ENCODE measurements at regions of chr11 and their contacts with region 1.

Region 1: DNA sequence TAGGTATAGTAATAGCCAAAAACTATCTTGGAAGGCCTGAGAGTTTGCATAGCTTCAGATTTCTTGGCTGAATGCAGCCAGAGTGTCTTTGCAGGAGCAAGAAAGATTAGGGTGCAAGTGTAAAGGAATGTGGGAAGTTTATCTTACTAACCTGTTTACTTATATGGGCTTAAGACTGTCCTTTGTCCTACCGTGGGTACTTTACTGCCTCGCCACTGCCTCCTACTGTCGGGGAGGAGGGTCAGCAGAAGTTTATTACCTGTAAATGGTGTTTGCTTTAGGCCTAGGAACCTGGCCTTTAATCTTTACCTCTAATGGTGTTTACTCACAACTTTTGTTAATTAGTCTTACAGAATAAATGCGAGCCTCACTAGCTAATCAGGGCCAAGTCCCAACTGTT is 633.8 kb downstream of the DLG2 start:
- DNase-seq: no peak
- H3K4me3 Mint-ChIP-seq: no peak overlapping the region
- H3K27ac Mint-ChIP-seq: no peak overlapping the region
- H3K4me1 Mint-ChIP-seq: no peaks in the 10 kb centered on the region
- H3K27me3 Mint-ChIP-seq: peaks cover 24% of the 10 kb centered on the region
- CTCF ChIP-seq: peak; percentile 26

Region 2: DNA sequence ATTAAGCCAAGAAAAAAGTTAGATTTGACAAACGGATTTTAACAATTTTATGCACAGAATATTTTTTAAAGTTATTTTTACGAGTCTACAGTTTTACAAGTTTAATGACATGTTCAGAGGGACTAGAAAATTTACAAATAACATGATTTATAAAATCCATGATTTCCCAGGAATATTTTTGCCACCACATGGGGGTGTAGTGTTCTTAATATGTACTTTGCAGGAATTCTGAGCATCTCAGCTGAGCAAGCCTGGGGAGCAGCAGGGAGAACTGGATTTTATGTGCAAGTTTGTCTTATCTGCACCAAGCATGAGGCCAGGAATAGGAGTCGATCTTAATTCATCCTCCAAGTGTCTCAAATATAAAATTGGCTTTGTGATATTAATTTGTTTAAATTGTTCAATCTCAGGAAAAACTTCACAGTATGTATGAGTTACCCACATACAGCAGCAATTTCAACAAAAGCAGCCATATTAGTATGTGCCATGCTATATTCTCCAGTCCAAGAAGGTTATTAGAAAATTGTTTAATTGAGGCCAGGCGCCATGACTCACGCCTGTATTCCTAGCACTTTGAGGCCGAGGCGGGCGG is 192.5 kb before region 1 on chr11:
- CTCF ChIA-PET with region 1: interaction called, 5 read pairs
- POLR2A ChIA-PET with region 1: no interaction called
- intact Hi-C with region 1: loop called (anchors 1 kb)
- DNase-seq: peak; percentile 27
- H3K4me3 Mint-ChIP-seq: no peak overlapping the region
- H3K27ac Mint-ChIP-seq: no peak overlapping the region
- H3K4me1 Mint-ChIP-seq: no peaks in the 10 kb centered on the region
- H3K27me3 Mint-ChIP-seq: peaks cover 12% of the 10 kb centered on the region
- CTCF ChIP-seq: peak; percentile 51

Region 3: GRCh38 chr11:84969103-84969502 is 24.3 kb before region 1 on chr11:
- CTCF ChIA-PET with region 1: no interaction called
- POLR2A ChIA-PET with region 1: no interaction called
- intact Hi-C with region 1: no loop called
- DNase-seq: no peak
- H3K4me3 Mint-ChIP-seq: no peak overlapping the region
- H3K27ac Mint-ChIP-seq: no peak overlapping the region
- H3K4me1 Mint-ChIP-seq: no peaks in the 10 kb centered on the region
- H3K27me3 Mint-ChIP-seq: peaks cover 16% of the 10 kb centered on the region
- CTCF ChIP-seq: no peak

Region 4: DNA sequence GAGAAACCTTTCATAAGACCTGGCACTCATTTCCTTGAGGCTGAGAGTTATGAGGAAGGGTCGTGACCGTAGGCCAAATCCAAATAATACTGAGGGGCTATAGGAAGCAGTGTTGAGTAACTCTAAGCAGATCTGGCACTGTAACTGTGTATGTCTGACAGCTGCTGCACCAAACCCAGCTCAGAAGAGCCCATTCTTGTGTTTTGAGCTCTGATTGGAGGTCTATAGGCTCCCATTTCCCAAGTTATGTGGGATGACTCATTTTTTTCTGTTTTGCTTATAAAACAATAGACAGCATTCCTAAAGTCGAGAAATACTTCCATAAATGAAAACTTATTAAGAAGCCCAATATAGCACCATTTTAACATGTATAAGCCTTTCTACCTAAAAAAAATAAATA is 12.1 kb before region 1 on chr11:
- CTCF ChIA-PET with region 1: no interaction called
- POLR2A ChIA-PET with region 1: no interaction called
- intact Hi-C with region 1: no loop called
- DNase-seq: peak; percentile 3
- H3K4me3 Mint-ChIP-seq: no peak overlapping the region
- H3K27ac Mint-ChIP-seq: no peak overlapping the region
- H3K4me1 Mint-ChIP-seq: no peaks in the 10 kb centered on the region
- H3K27me3 Mint-ChIP-seq: peaks cover 16% of the 10 kb centered on the region
- CTCF ChIP-seq: no peak

Region 5: DNA sequence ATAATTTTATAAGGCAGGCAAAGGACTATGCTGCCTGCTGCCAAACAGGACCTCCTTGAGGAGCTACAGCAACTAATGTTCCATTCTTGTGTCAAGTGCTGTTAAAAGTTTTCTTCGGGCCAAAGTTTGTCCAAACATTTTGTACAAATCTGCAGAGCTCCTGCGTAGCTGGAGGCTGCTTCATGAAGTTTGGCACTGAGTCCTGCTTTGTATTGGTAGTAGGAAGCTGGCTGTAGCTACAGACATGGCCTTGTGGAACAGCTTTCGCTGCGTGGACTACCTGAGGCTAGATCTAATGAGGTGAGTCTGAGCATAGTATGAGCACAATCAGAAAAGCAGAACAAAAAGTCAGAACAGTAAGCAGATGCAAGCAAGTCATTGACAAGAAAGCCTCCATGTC is 105.6 kb after region 1 on chr11:
- CTCF ChIA-PET with region 1: no interaction called
- POLR2A ChIA-PET with region 1: no interaction called
- intact Hi-C with region 1: no loop called
- DNase-seq: no peak
- H3K4me3 Mint-ChIP-seq: no peak overlapping the region
- H3K27ac Mint-ChIP-seq: no peak overlapping the region
- H3K4me1 Mint-ChIP-seq: no peaks in the 10 kb centered on the region
- H3K27me3 Mint-ChIP-seq: peaks cover 28% of the 10 kb centered on the region
- CTCF ChIP-seq: no peak

Region 6: GRCh38 chr11:85154294-85154693 is 160.9 kb after region 1 on chr11:
- CTCF ChIA-PET with region 1: no interaction called
- POLR2A ChIA-PET with region 1: no interaction called
- intact Hi-C with region 1: no loop called
- DNase-seq: no peak
- H3K4me3 Mint-ChIP-seq: no peak overlapping the region
- H3K27ac Mint-ChIP-seq: no peak overlapping the region
- H3K4me1 Mint-ChIP-seq: no peaks in the 10 kb centered on the region
- H3K27me3 Mint-ChIP-seq: no peaks in the 10 kb centered on the region
- CTCF ChIP-seq: no peak

Measured in MCF 10A (cell line).